Sigmoid colon (tissue), 7 donors: ENCODE measurements at regions of chr2 and their contacts with region 1.

Region 1: DNA sequence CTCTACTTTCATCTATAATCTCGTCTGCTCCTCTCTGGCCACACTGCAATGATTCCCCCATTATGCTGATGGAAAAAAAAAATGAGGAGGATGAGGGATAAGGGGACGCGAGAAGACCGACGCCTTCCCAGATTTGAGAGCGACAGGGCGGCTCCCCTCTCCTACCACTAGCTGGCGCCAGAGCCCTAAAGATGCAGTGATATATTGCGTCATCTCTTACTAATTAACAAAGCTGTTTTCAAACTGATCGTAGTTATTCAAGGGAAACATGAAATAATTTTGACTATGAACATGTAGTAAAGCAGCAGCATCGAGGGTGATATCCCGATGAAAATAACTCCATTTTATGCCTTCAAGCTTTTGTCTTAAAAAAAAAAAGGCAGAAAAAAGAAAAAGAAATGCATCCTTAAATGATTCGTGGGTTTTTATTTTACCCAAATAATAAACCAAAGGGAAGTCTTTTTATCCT is 48.0 kb upstream of the HNRNPA3 start:
- DNase-seq: peak; percentile 92
- H3K4me3 ChIP-seq: peak overlapping the region; percentile 12 to 49 (median 45)
- H3K27ac ChIP-seq: peak overlapping the region; percentile 81 to 88 (median 86)
- H3K4me1 ChIP-seq: peaks cover 0 to 18% (median 12%) of the 10 kb centered on the region in 4 donors
- H3K27me3 ChIP-seq: no peaks in the 10 kb centered on the region
- CTCF ChIP-seq: peak; percentile 99 to 100 (median 100)
- EP300 ChIP-seq: no peak
- POLR2A ChIP-seq: no peak

Region 2: GRCh38 chr2:176742271-176742670 is 422.3 kb before region 1 on chr2:
- intact Hi-C with region 1: no loop called
- DNase-seq: no peak
- H3K4me3 ChIP-seq: no peak overlapping the region
- H3K27ac ChIP-seq: no peak overlapping the region
- H3K4me1 ChIP-seq: peaks cover 0 to 17% (median 5%) of the 10 kb centered on the region in 4 donors
- H3K27me3 ChIP-seq: no peaks in the 10 kb centered on the region
- CTCF ChIP-seq: no peak
- EP300 ChIP-seq: no peak
- POLR2A ChIP-seq: no peak

Region 3: GRCh38 chr2:177084607-177085006 is 80.0 kb before region 1 on chr2:
- intact Hi-C with region 1: no loop called
- DNase-seq: no peak
- H3K4me3 ChIP-seq: no peak overlapping the region
- H3K27ac ChIP-seq: no peak overlapping the region
- H3K4me1 ChIP-seq: peaks cover 0 to 13% (median 0%) of the 10 kb centered on the region in 4 donors
- H3K27me3 ChIP-seq: no peaks in the 10 kb centered on the region
- CTCF ChIP-seq: no peak
- EP300 ChIP-seq: no peak
- POLR2A ChIP-seq: no peak

Region 4: GRCh38 chr2:177212106-177212890 is 47.7 kb after region 1 on chr2 and contains the start of gene HNRNPA3:
- intact Hi-C with region 1: loop called (anchors 2 kb)
- DNase-seq: peak; percentile 100
- H3K4me3 ChIP-seq: peak within 1 kb of the TSS; percentile 77 to 98 (median 87)
- H3K27ac ChIP-seq: peak within 1 kb of the TSS; percentile 99 to 100 (median 100)
- H3K4me1 ChIP-seq: peaks cover 0 to 52% (median 44%) of the 10 kb centered on the region in 4 donors
- H3K27me3 ChIP-seq: no peaks in the 10 kb centered on the region
- CTCF ChIP-seq: peak in 2 of 4 experiments; percentile 22 to 27
- EP300 ChIP-seq: peak; percentile 1 to 59 (median 25)
- POLR2A ChIP-seq: peak; percentile 95
- total RNA-seq, gene HNRNPA3: 69.2 to 82.1 (median 74.5) TPM

Region 5: GRCh38 chr2:177295484-177295883 is 130.9 kb after region 1 on chr2:
- intact Hi-C with region 1: loop called (anchors 1 kb)
- DNase-seq: no peak
- H3K4me3 ChIP-seq: peak overlapping the region in 2 of 4 donors; percentile 1 to 4
- H3K27ac ChIP-seq: peak overlapping the region; percentile 53 to 73 (median 70)
- H3K4me1 ChIP-seq: peaks cover 0 to 14% (median 10%) of the 10 kb centered on the region in 4 donors
- H3K27me3 ChIP-seq: no peaks in the 10 kb centered on the region
- CTCF ChIP-seq: no peak
- EP300 ChIP-seq: no peak
- POLR2A ChIP-seq: no peak

Region 6: DNA sequence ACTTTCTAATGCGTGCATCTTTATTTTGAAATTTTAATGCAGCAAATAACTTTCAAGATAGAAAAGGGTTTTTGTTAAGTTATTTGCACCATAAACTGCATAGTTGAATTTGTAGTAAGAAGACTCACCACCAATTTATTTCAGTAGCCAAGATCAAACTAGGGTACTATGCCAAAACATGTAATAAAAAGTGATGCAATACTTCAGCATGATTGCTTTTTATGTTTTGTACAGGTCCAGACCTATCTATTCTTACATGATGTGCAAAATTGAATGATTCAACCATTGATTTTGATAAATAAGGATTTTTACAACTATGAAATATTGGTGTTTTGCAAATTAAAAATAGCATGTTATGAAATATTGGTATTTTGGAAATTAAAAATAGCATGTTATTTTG is 254.7 kb after region 1 on chr2:
- intact Hi-C with region 1: loop called (anchors 5 kb)
- DNase-seq: no peak
- H3K4me3 ChIP-seq: no peak overlapping the region
- H3K27ac ChIP-seq: no peak overlapping the region
- H3K4me1 ChIP-seq: peaks cover 0 to 54% (median 27%) of the 10 kb centered on the region in 4 donors
- H3K27me3 ChIP-seq: no peaks in the 10 kb centered on the region
- CTCF ChIP-seq: no peak
- EP300 ChIP-seq: no peak
- POLR2A ChIP-seq: no peak

Region 7: DNA sequence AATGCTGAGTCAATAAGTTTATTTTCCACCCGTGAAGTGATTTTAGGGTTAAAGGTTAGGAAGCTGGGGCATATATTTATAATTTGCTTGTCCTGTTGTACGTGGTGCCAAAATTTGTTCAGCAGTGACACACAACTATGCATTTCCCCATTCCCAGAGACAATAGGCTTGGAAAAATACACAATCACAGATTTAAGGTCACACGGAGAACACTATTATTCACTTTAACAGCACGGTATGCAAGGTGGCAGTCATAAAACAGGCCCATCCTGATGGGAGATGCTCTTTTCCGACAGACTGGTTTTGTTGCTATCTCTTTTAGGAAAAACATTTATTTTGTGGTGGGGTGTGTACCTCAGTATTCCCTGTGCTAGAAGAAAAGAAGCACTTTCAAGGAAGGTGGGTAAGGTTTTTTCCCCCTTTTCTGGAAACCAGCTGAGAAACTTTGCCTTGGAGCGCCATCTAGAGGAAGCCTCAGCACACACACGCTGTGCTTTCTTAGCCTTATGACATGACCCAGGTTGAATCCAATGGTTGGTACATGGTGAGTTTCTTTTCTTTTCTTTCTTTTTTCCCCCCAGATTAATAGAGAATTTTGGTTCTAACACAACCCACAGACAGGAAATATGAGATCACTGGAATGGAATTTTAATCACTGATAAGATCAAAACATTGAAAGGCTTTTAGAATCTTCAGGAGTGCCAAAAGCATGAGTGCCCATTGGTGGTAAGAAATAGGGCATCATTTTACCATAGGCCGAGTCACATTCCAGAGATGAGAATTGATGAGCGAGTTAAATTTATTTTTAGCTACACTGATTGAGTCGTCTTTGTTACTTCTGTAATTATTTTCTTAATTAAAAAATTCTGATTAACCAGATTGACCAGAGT is 560.0 kb after region 1 on chr2:
- intact Hi-C with region 1: loop called (anchors 10 kb)
- DNase-seq: peak; percentile 65
- H3K4me3 ChIP-seq: no peak overlapping the region
- H3K27ac ChIP-seq: no peak overlapping the region
- H3K4me1 ChIP-seq: peaks cover 0 to 6% (median 0%) of the 10 kb centered on the region in 4 donors
- H3K27me3 ChIP-seq: no peaks in the 10 kb centered on the region
- CTCF ChIP-seq: peak; percentile 66 to 82 (median 74)
- EP300 ChIP-seq: no peak
- POLR2A ChIP-seq: no peak